ENCODE measurements at regions of chr3 and their contacts with region 1.

Region 1: GRCh38 chr3:127690823-127691452 is 18.2 kb downstream of the ABTB1 start:
- DNase-seq: no peak
- H3K4me3 ChIP-seq: no peak overlapping the region
- CTCF ChIP-seq: peak; percentile 91

Region 2: DNA sequence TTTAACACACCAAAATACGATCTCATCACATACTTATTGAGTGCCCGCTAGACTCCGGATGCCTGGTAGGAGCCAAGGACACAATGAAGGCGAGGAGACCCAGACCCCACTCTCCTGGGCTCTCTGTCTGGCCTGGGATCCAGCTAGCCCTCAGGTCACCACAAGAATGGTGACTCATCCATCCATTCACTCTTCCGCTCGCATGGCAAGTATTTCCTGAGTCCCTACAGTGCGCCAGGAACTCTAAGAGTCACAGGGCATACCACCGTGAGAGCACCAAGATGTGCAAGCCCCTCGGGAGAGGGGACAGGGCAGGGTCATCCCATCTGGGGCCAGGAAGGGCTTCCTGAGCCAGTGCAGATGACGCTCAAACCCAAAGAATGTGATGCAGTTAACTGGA is 301.5 kb before region 1 on chr3:
- CTCF ChIA-PET with region 1: no interaction called
- POLR2A ChIA-PET with region 1: no interaction called
- DNase-seq: no peak
- H3K4me3 ChIP-seq: no peak overlapping the region
- CTCF ChIP-seq: no peak

Region 3: GRCh38 chr3:127646501-127647046 is 44.4 kb before region 1 on chr3:
- CTCF ChIA-PET with region 1: interaction called, 21 read pairs
- POLR2A ChIA-PET with region 1: no interaction called
- DNase-seq: no peak
- H3K4me3 ChIP-seq: no peak overlapping the region
- CTCF ChIP-seq: no peak

Region 4: DNA sequence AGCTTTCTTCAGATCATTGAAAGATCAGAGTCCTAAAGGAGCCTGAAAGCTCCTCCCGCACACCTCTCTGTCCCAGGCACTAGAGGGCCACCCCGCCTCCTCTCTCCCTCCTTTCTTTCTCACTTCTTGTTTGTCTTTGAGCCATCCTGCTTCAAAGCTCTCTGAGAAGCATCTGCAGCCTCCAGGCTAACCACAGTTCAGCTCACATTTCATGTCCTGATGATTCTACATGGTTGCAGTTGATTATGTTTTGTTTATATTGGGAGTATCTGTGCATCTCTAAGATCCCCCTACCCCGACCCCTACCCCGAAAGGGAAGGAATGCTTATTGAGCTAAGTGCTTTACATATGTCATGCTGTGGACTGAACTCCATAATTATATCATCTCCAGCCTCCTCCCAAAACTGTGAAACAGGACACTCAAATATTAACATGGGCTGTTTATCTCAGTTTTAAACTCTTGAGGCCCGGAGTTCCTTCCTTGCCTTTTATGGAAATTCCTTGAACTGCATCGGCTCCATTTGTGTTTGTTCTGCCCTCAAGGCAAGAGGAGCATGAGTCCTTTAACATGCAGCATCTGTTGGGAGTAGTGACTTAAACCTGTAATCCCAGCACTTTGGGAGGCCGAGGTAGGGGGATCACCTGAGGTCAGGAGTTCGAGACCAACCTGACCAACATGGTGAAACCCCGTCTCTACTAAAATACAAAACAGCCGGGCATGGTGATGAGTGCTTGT is 100.4 kb after region 1 on chr3:
- CTCF ChIA-PET with region 1: interaction called, 10 read pairs
- POLR2A ChIA-PET with region 1: no interaction called
- DNase-seq: peak; percentile 42
- H3K4me3 ChIP-seq: no peak overlapping the region
- CTCF ChIP-seq: peak; percentile 47

Region 5: GRCh38 chr3:127831723-127832172 is 140.8 kb after region 1 on chr3:
- CTCF ChIA-PET with region 1: interaction called, 24 read pairs
- POLR2A ChIA-PET with region 1: no interaction called
- DNase-seq: no peak
- H3K4me3 ChIP-seq: no peak overlapping the region
- CTCF ChIP-seq: peak; percentile 68

Region 6: DNA sequence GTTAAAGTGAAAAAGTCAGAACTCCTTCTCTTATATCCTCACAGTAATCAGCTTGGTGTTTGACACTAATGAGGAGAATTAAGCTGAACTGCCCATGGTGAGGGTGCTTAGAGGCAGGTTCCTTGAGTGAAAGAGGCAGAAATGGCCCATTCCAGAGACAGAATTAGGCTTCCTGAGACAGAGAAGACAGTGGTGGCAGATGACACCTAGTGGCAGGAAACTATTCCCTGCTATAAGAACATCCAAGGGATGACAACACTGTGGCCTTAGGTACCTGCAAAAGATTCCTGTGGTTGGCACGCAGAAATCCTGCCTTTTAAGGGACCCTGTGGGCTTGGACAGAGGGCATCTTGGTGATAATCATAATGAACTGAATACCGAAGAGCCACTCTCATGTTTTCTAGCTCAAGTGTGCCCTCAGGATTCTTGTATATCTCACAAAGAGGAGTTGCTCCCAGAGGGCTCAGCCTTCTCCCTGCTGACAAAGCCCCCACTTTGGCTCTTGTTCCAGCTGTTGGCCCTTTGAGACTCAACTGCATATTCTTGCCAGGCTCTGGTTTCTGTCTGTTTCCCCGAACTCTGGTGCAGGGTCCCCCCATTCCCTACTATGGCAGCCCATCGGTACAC is 280.1 kb after region 1 on chr3:
- CTCF ChIA-PET with region 1: interaction called, 25 read pairs
- POLR2A ChIA-PET with region 1: no interaction called
- DNase-seq: no peak
- H3K4me3 ChIP-seq: no peak overlapping the region
- CTCF ChIP-seq: peak; percentile 73

Region 7: DNA sequence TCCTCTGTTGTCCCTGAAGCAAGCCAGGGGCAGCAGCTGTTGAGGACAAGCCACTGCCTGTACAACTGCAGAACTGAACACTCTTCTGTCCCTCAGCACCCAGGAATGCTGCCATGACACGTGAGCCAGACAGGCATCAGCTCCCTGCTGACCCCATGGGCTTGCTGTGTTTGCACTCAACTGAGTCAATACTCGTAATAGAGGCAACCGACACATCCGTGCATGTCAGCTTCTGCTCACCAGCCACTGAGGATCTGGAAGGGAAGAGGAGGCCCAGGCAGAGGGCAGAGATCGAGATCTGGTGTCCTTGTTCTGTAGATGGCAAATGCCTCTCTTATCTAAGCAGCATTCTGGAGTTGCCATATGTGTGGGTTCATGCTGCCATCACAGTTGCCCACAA is 307.0 kb after region 1 on chr3:
- CTCF ChIA-PET with region 1: no interaction called
- POLR2A ChIA-PET with region 1: no interaction called
- DNase-seq: no peak
- H3K4me3 ChIP-seq: no peak overlapping the region
- CTCF ChIP-seq: no peak